Naive thymus-derived CD4-positive, alpha-beta T cell (primary cell): ENCODE measurements at regions of chr11 and their contacts with region 1.

Region 1: GRCh38 chr11:46700241-46701077 is at the starts of genes ARHGAP1 and ZNF408:
- DNase-seq: peak; percentile 94 to 99 (median 99)
- ATAC-seq: peak; percentile 99
- H3K4me3 ChIP-seq: peak within 1 kb of the TSS; percentile 95
- H3K4me3 Mint-ChIP-seq: peak within 1 kb of the TSS; percentile 91 to 100 (median 99)
- H3K27ac ChIP-seq: peak within 1 kb of the TSS; percentile 75
- H3K27ac Mint-ChIP-seq: peak within 1 kb of the TSS; percentile 82 to 98 (median 96)
- H3K4me1 ChIP-seq: peaks cover 33 to 38% of the 10 kb centered on the region in 2 donors
- H3K4me1 Mint-ChIP-seq: peaks cover 40 to 71% (median 54%) of the 10 kb centered on the region in 7 donors
- H3K27me3 ChIP-seq: no peaks in the 10 kb centered on the region
- H3K27me3 Mint-ChIP-seq: peaks cover 0 to 5% (median 0%) of the 10 kb centered on the region in 5 donors
- total RNA-seq, gene ARHGAP1: 44.6 to 82.5 (median 64.6) TPM
- total RNA-seq, gene ZNF408: 7.8 to 20.0 (median 16.6) TPM

Region 2: GRCh38 chr11:45846974-45847910 is 853.2 kb before region 1 on chr11 and contains the start of gene CRY2:
- CTCF ChIA-PET with region 1: no interaction called
- POLR2A ChIA-PET with region 1: interaction called, 4 read pairs
- intact Hi-C with region 1: loop called in 1 of 2 experiments (anchors 2 kb)
- DNase-seq: peak; percentile 94 to 98 (median 97)
- ATAC-seq: peak; percentile 90
- H3K4me3 ChIP-seq: peak within 1 kb of the TSS; percentile 85
- H3K4me3 Mint-ChIP-seq: peak within 1 kb of the TSS; percentile 78 to 96 (median 90)
- H3K27ac ChIP-seq: peak within 1 kb of the TSS; percentile 91
- H3K27ac Mint-ChIP-seq: peak within 1 kb of the TSS; percentile 89 to 99 (median 96)
- H3K4me1 ChIP-seq: peaks cover 21 to 34% of the 10 kb centered on the region in 2 donors
- H3K4me1 Mint-ChIP-seq: peaks cover 40 to 68% (median 54%) of the 10 kb centered on the region in 7 donors
- H3K27me3 ChIP-seq: no peaks in the 10 kb centered on the region
- H3K27me3 Mint-ChIP-seq: peaks cover 0 to 20% (median 0%) of the 10 kb centered on the region in 5 donors
- total RNA-seq, gene CRY2: 31.1 to 202 (median 66.9) TPM

Region 3: GRCh38 chr11:46593550-46594373 is 106.7 kb before region 1 on chr11 and contains the start of gene AMBRA1:
- CTCF ChIA-PET with region 1: no interaction called
- POLR2A ChIA-PET with region 1: interaction called, 5 read pairs
- intact Hi-C with region 1: loop called (anchors 1 kb)
- DNase-seq: peak; percentile 59 to 83 (median 80)
- ATAC-seq: peak; percentile 97
- H3K4me3 ChIP-seq: peak within 1 kb of the TSS; percentile 69
- H3K4me3 Mint-ChIP-seq: peak within 1 kb of the TSS; percentile 90 to 100 (median 97)
- H3K27ac ChIP-seq: peak within 1 kb of the TSS; percentile 84
- H3K27ac Mint-ChIP-seq: peak within 1 kb of the TSS; percentile 92 to 98 (median 96)
- H3K4me1 ChIP-seq: peaks cover 19 to 22% of the 10 kb centered on the region in 2 donors
- H3K4me1 Mint-ChIP-seq: peaks cover 23 to 49% (median 41%) of the 10 kb centered on the region in 7 donors
- H3K27me3 ChIP-seq: no peaks in the 10 kb centered on the region
- H3K27me3 Mint-ChIP-seq: no peaks in the 10 kb centered on the region
- total RNA-seq, gene AMBRA1: 38.1 to 48.7 (median 44.6) TPM

Region 4: GRCh38 chr11:46845740-46846509 is 145.5 kb after region 1 on chr11 and contains the start of gene CKAP5:
- CTCF ChIA-PET with region 1: no interaction called
- POLR2A ChIA-PET with region 1: interaction called, 3 read pairs
- intact Hi-C with region 1: loop called in 1 of 2 experiments (anchors 1 kb)
- DNase-seq: peak; percentile 63 to 89 (median 80)
- ATAC-seq: peak; percentile 96
- H3K4me3 ChIP-seq: peak within 1 kb of the TSS; percentile 71
- H3K4me3 Mint-ChIP-seq: peak within 1 kb of the TSS; percentile 85 to 99 (median 97)
- H3K27ac ChIP-seq: peak within 1 kb of the TSS; percentile 71
- H3K27ac Mint-ChIP-seq: peak within 1 kb of the TSS; percentile 88 to 97 (median 93)
- H3K4me1 ChIP-seq: peaks cover 0 to 14% of the 10 kb centered on the region in 2 donors
- H3K4me1 Mint-ChIP-seq: peaks cover 33 to 50% (median 43%) of the 10 kb centered on the region in 7 donors
- H3K27me3 ChIP-seq: no peaks in the 10 kb centered on the region
- H3K27me3 Mint-ChIP-seq: no peaks in the 10 kb centered on the region
- total RNA-seq, gene CKAP5: 28.3 to 126 (median 46.0) TPM

Region 5: DNA sequence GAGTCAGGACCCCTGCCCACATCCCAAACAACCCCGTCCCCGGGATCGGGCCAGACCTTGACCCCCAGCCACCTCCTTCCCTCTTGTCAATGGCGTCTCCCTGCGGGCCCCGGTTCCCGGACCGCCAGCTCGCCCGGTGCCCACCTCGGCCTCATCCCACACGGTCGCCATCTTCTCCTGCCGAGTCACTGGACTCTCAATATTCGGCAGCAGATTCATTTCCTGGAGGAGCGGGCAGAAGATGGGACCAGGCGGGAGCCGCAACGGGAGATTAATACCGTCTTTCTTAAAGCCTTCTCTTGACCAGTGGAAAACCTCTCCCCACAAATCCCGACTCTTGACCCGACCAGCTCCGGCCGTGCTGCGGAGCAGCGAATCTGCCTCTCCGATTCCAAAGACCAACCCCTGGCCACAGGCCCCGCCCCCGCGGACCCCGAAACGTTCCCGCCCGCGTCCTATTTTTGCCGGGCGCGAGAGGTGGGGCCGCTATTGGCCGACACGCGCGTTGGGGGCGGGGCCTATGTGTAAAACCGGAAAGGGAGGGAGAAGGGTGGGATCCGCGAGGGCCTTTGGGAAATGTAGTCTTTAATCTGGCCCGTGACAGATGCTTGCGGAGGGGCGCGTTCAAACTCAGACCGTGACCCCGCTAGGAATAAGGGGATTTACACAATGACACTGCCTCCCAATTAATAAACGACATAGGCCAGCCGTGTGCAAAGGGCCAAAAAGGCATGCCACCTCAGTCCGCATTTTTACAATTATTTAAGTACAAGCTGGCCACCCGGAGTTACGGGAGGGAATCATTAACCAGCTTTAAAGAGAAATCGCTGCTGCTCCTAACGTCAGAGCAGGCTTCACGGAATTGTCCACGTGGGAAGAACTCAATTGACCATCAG is 725.9 kb after region 1 on chr11 and contains the start of gene PSMC3:
- CTCF ChIA-PET with region 1: no interaction called
- POLR2A ChIA-PET with region 1: no interaction called
- intact Hi-C with region 1: loop called in 1 of 2 experiments (anchors 1 kb)
- DNase-seq: peak; percentile 92 to 99 (median 95)
- ATAC-seq: peak; percentile 98
- H3K4me3 ChIP-seq: peak within 1 kb of the TSS; percentile 95
- H3K4me3 Mint-ChIP-seq: peak within 1 kb of the TSS; percentile 91 to 99 (median 98)
- H3K27ac ChIP-seq: peak within 1 kb of the TSS; percentile 96
- H3K27ac Mint-ChIP-seq: peak within 1 kb of the TSS; percentile 93 to 99 (median 97)
- H3K4me1 ChIP-seq: peaks cover 9 to 10% of the 10 kb centered on the region in 2 donors
- H3K4me1 Mint-ChIP-seq: peaks cover 16 to 32% (median 27%) of the 10 kb centered on the region in 7 donors
- H3K27me3 ChIP-seq: no peaks in the 10 kb centered on the region
- H3K27me3 Mint-ChIP-seq: no peaks in the 10 kb centered on the region
- total RNA-seq, gene PSMC3: 42.2 to 149 (median 51.3) TPM

Region 6: GRCh38 chr11:47766305-47767227 is 1066.1 kb after region 1 on chr11:
- CTCF ChIA-PET with region 1: no interaction called
- POLR2A ChIA-PET with region 1: no interaction called
- intact Hi-C with region 1: loop called (anchors 1 to 5 kb)
- DNase-seq: peak; percentile 60 to 84 (median 79)
- ATAC-seq: peak; percentile 52
- H3K4me3 ChIP-seq: peak overlapping the region; percentile 94
- H3K4me3 Mint-ChIP-seq: peak overlapping the region; percentile 88 to 100 (median 96)
- H3K27ac ChIP-seq: peak overlapping the region; percentile 97
- H3K27ac Mint-ChIP-seq: peak overlapping the region; percentile 96 to 100 (median 99)
- H3K4me1 ChIP-seq: peaks cover 20 to 22% of the 10 kb centered on the region in 2 donors
- H3K4me1 Mint-ChIP-seq: peaks cover 16 to 39% (median 23%) of the 10 kb centered on the region in 7 donors
- H3K27me3 ChIP-seq: no peaks in the 10 kb centered on the region
- H3K27me3 Mint-ChIP-seq: no peaks in the 10 kb centered on the region